ENCODE measurements at regions of chr13 and their contacts with region 1.

Region 1: GRCh38 chr13:73702419-73703071 is 431.7 kb downstream of the KLF12 start:
- DNase-seq: peak; percentile 72
- H3K4me3 Mint-ChIP-seq: peak overlapping the region; percentile 67
- H3K27ac Mint-ChIP-seq: peak overlapping the region; percentile 96
- H3K4me1 Mint-ChIP-seq: peaks cover 55% of the 10 kb centered on the region
- H3K27me3 Mint-ChIP-seq: no peaks in the 10 kb centered on the region

Region 2: GRCh38 chr13:73081256-73081915 is 621.2 kb before region 1 on chr13:
- CTCF ChIA-PET with region 1: no interaction called
- POLR2A ChIA-PET with region 1: no interaction called
- DNase-seq: no peak
- H3K4me3 Mint-ChIP-seq: no peak overlapping the region
- H3K27ac Mint-ChIP-seq: no peak overlapping the region
- H3K4me1 Mint-ChIP-seq: no peaks in the 10 kb centered on the region
- H3K27me3 Mint-ChIP-seq: peaks cover 5% of the 10 kb centered on the region

Region 3: GRCh38 chr13:73399347-73400216 is 303.0 kb before region 1 on chr13:
- CTCF ChIA-PET with region 1: no interaction called
- POLR2A ChIA-PET with region 1: no interaction called
- DNase-seq: no peak
- H3K4me3 Mint-ChIP-seq: no peak overlapping the region
- H3K27ac Mint-ChIP-seq: no peak overlapping the region
- H3K4me1 Mint-ChIP-seq: no peaks in the 10 kb centered on the region
- H3K27me3 Mint-ChIP-seq: peaks cover 7% of the 10 kb centered on the region

Region 4: DNA sequence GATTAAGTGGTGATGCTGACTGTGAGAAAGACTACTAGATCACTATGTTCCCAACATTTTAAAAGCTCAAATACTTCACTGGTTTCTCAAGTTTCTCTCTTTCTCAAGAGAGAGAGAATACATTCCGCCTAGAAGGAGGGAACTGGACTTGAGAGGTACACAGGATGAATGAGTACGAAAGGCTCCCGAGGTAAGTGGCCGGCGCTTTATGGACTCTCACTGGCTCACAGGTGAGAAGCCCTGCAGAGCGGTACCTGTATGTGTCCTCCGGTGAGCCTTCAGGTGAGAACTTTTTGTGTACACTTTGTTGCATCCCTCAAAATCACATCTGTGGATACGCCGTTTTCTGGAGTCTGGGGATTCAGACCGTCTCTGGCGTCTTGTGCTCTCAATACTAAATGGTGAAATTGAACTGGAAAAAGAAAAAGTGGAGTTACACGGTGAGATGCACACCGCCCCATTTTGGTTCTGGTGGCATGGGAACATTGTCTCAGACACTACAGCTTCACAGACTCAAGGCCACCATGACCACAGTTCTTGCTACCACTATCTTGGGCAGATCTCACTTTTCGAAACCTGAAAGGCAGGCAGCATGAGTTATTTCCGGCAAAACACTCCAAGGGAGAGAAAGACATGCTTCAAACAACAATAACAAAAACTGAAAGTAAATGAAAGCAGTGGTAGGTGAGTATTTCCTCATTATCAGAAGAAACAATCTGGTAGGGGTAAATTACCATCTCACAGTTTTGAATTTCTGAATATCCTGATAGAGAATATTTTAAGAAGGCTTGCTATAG is 12.8 kb after region 1 on chr13:
- CTCF ChIA-PET with region 1: interaction called, 3 read pairs
- POLR2A ChIA-PET with region 1: interaction called, 10 read pairs
- DNase-seq: peak; percentile 78
- H3K4me3 Mint-ChIP-seq: peak overlapping the region; percentile 51
- H3K27ac Mint-ChIP-seq: peak overlapping the region; percentile 93
- H3K4me1 Mint-ChIP-seq: peaks cover 56% of the 10 kb centered on the region
- H3K27me3 Mint-ChIP-seq: no peaks in the 10 kb centered on the region